ENCODE measurements at regions of chr2 and their contacts with region 1.

Region 1: GRCh38 chr2:170770606-170771420 is 635 bp downstream of the ERICH2 start:
- DNase-seq: peak; percentile 88
- ATAC-seq: peak; percentile 91
- H3K4me3 ChIP-seq: peak overlapping the region; percentile 99
- H3K27ac ChIP-seq: peak overlapping the region; percentile 58
- H3K4me1 ChIP-seq: peaks cover 7% of the 10 kb centered on the region; the same call in 1 of the 2 replicates
- H3K27me3 ChIP-seq: no peaks in the 10 kb centered on the region
- CTCF ChIP-seq: 0 out of 2 replicates have a peak, but pooled peaks have one; percentile 16

Region 2: GRCh38 chr2:170701011-170701410 is 69.8 kb before region 1 on chr2:
- CTCF ChIA-PET with region 1: no interaction called
- POLR2A ChIA-PET with region 1: no interaction called
- intact Hi-C with region 1: loop called (anchors 2 kb)
- DNase-seq: no peak
- ATAC-seq: no peak
- H3K4me3 ChIP-seq: no peak overlapping the region
- H3K27ac ChIP-seq: no peak overlapping the region
- H3K4me1 ChIP-seq: no peaks in the 10 kb centered on the region
- H3K27me3 ChIP-seq: no peaks in the 10 kb centered on the region
- CTCF ChIP-seq: no peak

Region 3: DNA sequence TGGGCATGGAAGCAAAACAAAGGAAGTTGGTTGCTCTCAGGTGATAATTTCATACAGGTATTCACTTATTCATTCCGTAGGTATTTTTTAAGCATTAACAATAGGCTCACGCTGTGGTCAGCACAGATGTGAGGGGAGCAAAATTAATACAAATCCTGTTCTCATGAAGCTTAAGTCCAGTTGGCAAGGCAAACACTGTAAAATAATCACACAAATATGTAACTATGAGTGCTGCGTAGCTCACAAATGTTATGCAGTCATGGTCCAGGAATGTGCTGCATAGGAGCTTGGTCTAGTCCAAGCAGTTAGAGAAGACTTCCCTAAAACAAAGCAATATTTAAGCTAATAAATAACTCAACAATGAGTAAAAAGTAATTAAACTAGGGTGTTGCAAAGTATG is 31.8 kb before region 1 on chr2:
- CTCF ChIA-PET with region 1: interaction called, 4 read pairs
- POLR2A ChIA-PET with region 1: interaction called, 11 read pairs
- intact Hi-C with region 1: loop called (anchors 2 kb)
- DNase-seq: peak; percentile 98
- ATAC-seq: peak; percentile 94
- H3K4me3 ChIP-seq: peak overlapping the region; percentile 50
- H3K27ac ChIP-seq: peak overlapping the region; percentile 87
- H3K4me1 ChIP-seq: peaks cover 28% of the 10 kb centered on the region
- H3K27me3 ChIP-seq: no peaks in the 10 kb centered on the region
- CTCF ChIP-seq: no peak

Region 4: GRCh38 chr2:171069286-171069956 is 298.6 kb after region 1 on chr2:
- CTCF ChIA-PET with region 1: no interaction called
- POLR2A ChIA-PET with region 1: no interaction called
- intact Hi-C with region 1: no loop called
- DNase-seq: no peak
- ATAC-seq: no peak
- H3K4me3 ChIP-seq: no peak overlapping the region
- H3K27ac ChIP-seq: no peak overlapping the region
- H3K4me1 ChIP-seq: 0 out of 2 replicates have a peak, but pooled peaks cover 2% of the 10 kb centered on the region
- H3K27me3 ChIP-seq: no peaks in the 10 kb centered on the region
- CTCF ChIP-seq: no peak

Measured in PC-3 (cell line).